Naive thymus-derived CD4-positive, alpha-beta T cell (primary cell): ENCODE measurements at regions of chr1 and their contacts with region 1.

Region 1: DNA sequence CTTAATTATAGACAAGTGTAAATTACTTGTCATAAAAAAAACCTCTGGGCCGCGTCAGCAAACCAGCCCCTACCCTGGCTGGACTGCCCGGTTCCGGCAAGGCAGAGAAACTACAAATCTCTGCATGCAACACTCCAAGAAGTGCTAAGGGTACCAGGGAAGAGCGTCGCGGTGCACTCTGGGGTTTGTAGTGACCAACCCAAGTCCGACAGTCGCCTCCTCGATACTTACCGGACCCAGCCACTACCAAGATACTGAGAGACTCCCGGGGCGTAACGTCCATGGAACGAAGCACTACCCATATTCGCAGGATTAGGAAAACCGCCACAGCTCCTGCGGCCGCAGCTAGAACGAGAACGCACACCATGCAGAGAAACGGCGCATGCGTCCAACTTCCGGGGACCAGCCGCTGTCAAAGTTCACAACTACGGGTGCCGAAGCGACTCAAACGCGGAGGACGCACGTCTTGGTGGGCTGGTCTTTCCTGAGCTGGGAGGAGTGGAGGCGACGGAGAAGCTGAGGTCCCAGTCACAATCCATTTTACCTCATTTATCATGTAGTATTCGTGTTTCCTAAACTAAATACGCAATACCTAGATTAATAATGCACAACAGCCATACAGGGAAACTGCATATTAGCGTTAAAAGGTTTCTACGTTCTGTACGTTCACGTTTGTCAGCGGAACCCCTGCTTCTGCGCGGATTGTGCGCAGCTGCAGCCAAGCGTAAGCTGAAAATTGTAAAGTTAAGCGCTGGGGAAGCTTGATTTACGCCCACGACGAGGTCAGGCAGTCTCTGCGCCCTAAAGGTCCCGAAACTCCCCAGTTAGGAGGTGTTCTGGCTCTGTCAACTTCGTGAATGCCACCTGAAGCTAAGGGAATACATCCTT is at the start of gene ALG14:
- DNase-seq: peak; percentile 81 to 96 (median 95)
- ATAC-seq: peak; percentile 96
- H3K4me3 ChIP-seq: peak within 1 kb of the TSS; percentile 96
- H3K4me3 Mint-ChIP-seq: peak within 1 kb of the TSS; percentile 88 to 100 (median 98)
- H3K27ac ChIP-seq: peak within 1 kb of the TSS; percentile 85
- H3K27ac Mint-ChIP-seq: peak within 1 kb of the TSS; percentile 95 to 100 (median 97)
- H3K4me1 ChIP-seq: peaks cover 8 to 12% of the 10 kb centered on the region in 2 donors
- H3K4me1 Mint-ChIP-seq: peaks cover 10 to 26% (median 18%) of the 10 kb centered on the region in 7 donors
- H3K27me3 ChIP-seq: no peaks in the 10 kb centered on the region
- H3K27me3 Mint-ChIP-seq: peaks cover 0 to 6% (median 0%) of the 10 kb centered on the region in 5 donors
- total RNA-seq, gene ALG14: 1.1 to 2.2 (median 1.5) TPM

Region 2: DNA sequence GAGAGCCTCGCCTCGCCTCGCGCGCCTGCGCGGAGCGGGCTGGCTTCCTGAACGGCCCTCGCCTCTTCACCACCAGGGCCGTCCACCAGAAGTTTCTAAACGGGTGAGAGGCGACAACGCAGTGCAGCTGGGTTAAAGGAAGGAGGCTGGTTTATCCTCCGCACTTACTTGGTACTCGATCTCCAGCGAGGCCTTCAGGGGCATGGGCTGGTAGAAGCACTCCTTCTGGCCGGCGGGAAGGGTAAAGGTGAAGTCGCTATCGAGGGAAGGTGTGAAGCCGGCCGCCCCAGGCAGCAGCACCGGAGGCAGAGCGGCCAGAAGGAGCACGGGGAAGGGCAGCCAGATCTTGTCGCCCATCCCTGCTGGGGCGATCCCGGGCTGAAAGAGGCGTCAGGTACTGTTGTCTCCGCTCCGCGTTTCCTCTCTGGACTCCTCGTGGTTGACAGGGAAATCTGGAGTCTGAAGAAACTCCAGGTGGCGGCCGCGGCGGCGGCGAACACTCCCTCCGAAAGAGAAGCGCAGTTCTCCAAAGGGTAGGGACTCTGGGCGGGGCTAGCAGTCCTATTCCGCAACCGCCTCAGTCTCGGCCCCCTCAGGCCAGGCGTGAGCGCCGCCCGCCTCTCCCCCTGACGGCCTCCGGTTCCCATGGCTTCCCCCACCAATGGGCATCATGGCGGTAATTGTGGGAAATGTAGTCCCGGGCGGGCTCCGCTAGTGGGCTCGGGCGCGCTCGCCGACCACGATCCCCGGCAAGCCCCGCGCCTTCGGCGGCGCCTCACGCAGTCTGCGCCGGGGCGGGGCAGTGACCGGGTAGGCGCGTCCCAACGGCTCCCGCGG is 1892.7 kb before region 1 on chr1 and contains the start of gene TMED5:
- CTCF ChIA-PET with region 1: no interaction called
- POLR2A ChIA-PET with region 1: no interaction called
- intact Hi-C with region 1: loop called in 1 of 2 experiments (anchors 1 kb)
- DNase-seq: peak; percentile 94 to 97 (median 96)
- ATAC-seq: peak; percentile 89
- H3K4me3 ChIP-seq: peak within 1 kb of the TSS; percentile 95
- H3K4me3 Mint-ChIP-seq: peak within 1 kb of the TSS; percentile 91 to 98 (median 94)
- H3K27ac ChIP-seq: peak within 1 kb of the TSS; percentile 91
- H3K27ac Mint-ChIP-seq: peak within 1 kb of the TSS; percentile 86 to 99 (median 97)
- H3K4me1 ChIP-seq: peaks cover 24 to 30% of the 10 kb centered on the region in 2 donors
- H3K4me1 Mint-ChIP-seq: peaks cover 30 to 59% (median 47%) of the 10 kb centered on the region in 7 donors
- H3K27me3 ChIP-seq: no peaks in the 10 kb centered on the region
- H3K27me3 Mint-ChIP-seq: no peaks in the 10 kb centered on the region
- total RNA-seq, gene TMED5: 37.8 to 60.0 (median 47.4) TPM

Region 3: GRCh38 chr1:93909146-93910050 is 1163.4 kb before region 1 on chr1 and contains the start of gene GCLM:
- CTCF ChIA-PET with region 1: no interaction called
- POLR2A ChIA-PET with region 1: interaction called, 3 read pairs
- intact Hi-C with region 1: loop called in 1 of 2 experiments (anchors 1 kb)
- DNase-seq: peak; percentile 81 to 97 (median 88)
- ATAC-seq: peak; percentile 98
- H3K4me3 ChIP-seq: peak within 1 kb of the TSS; percentile 61
- H3K4me3 Mint-ChIP-seq: peak within 1 kb of the TSS; percentile 86 to 99 (median 90)
- H3K27ac ChIP-seq: peak within 1 kb of the TSS; percentile 73
- H3K27ac Mint-ChIP-seq: peak within 1 kb of the TSS; percentile 60 to 94 (median 90)
- H3K4me1 ChIP-seq: peaks cover 9 to 13% of the 10 kb centered on the region in 2 donors
- H3K4me1 Mint-ChIP-seq: peaks cover 19 to 38% (median 33%) of the 10 kb centered on the region in 7 donors
- H3K27me3 ChIP-seq: no peaks in the 10 kb centered on the region
- H3K27me3 Mint-ChIP-seq: peaks cover 0 to 30% (median 0%) of the 10 kb centered on the region in 5 donors
- total RNA-seq, gene GCLM: 6.4 to 23.8 (median 11.5) TPM

Region 4: DNA sequence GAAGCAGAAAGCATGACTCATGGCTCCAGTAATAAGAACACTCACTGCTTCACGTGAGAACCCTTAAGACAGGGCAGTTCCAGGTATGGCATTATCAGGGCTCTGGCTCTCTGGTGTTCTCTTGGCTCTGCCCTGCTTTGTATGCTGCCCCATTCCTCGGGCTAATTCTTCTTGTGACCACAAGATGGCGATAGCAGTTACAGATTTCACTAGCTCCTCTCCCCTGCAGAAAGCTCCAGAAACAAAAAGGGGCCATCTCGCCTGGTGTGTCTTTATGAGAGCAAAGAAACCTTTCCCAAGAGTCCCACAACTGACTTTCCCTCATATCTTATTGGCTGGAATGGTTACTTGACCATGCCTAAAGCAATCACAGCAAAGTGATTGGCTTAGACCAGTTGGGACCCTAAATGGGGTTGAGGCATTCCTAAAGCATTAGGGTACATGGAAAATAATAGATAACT is 591.3 kb before region 1 on chr1:
- CTCF ChIA-PET with region 1: no interaction called
- POLR2A ChIA-PET with region 1: no interaction called
- intact Hi-C with region 1: no loop called
- DNase-seq: peak in 7 of 9 donors; percentile 5 to 51 (median 33)
- ATAC-seq: peak; percentile 85
- H3K4me3 ChIP-seq: no peak overlapping the region
- H3K4me3 Mint-ChIP-seq: no peak overlapping the region
- H3K27ac ChIP-seq: no peak overlapping the region
- H3K27ac Mint-ChIP-seq: peak overlapping the region in 1 of 9 donors; percentile 55
- H3K4me1 ChIP-seq: no peaks in the 10 kb centered on the region
- H3K4me1 Mint-ChIP-seq: peaks cover 0 to 2% (median 0%) of the 10 kb centered on the region in 7 donors
- H3K27me3 ChIP-seq: no peaks in the 10 kb centered on the region
- H3K27me3 Mint-ChIP-seq: no peaks in the 10 kb centered on the region

Region 5: GRCh38 chr1:94926915-94927404 is 145.8 kb before region 1 on chr1 and contains the start of gene CNN3:
- CTCF ChIA-PET with region 1: no interaction called
- POLR2A ChIA-PET with region 1: no interaction called
- intact Hi-C with region 1: loop called (anchors 1 kb)
- DNase-seq: peak; percentile 56 to 78 (median 68)
- ATAC-seq: peak; percentile 91
- H3K4me3 ChIP-seq: peak within 1 kb of the TSS; percentile 39
- H3K4me3 Mint-ChIP-seq: peak within 1 kb of the TSS; percentile 88 to 97 (median 94)
- H3K27ac ChIP-seq: peak within 1 kb of the TSS; percentile 63
- H3K27ac Mint-ChIP-seq: peak within 1 kb of the TSS; percentile 37 to 92 (median 84)
- H3K4me1 ChIP-seq: no peaks in the 10 kb centered on the region
- H3K4me1 Mint-ChIP-seq: peaks cover 12 to 38% (median 34%) of the 10 kb centered on the region in 7 donors
- H3K27me3 ChIP-seq: no peaks in the 10 kb centered on the region
- H3K27me3 Mint-ChIP-seq: peaks cover 18 to 57% (median 26%) of the 10 kb centered on the region in 5 donors
- total RNA-seq, gene CNN3: 4.4 to 14.9 (median 7.4) TPM

Region 6: DNA sequence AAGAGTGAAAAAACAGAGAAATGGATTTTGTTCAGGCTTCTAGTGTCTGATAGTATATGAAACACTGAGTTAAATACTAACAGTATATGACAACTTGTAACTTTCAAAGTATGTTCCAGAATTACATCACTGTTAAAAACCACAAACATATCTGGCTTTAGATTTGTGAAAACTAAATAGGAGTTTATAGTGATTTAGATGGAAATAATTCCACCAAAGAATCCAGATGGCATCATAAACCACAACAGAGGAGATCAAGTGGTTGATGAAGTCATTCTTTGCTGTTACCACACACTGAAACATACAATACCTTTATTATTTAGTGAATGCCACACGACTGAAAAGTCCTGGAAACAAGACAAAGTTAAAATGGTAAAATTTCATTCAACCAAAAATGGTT is 37.2 kb before region 1 on chr1:
- CTCF ChIA-PET with region 1: no interaction called
- POLR2A ChIA-PET with region 1: no interaction called
- intact Hi-C with region 1: no loop called
- DNase-seq: no peak
- ATAC-seq: no peak
- H3K4me3 ChIP-seq: no peak overlapping the region
- H3K4me3 Mint-ChIP-seq: no peak overlapping the region
- H3K27ac ChIP-seq: no peak overlapping the region
- H3K27ac Mint-ChIP-seq: no peak overlapping the region
- H3K4me1 ChIP-seq: no peaks in the 10 kb centered on the region
- H3K4me1 Mint-ChIP-seq: no peaks in the 10 kb centered on the region
- H3K27me3 ChIP-seq: no peaks in the 10 kb centered on the region
- H3K27me3 Mint-ChIP-seq: no peaks in the 10 kb centered on the region

Region 7: DNA sequence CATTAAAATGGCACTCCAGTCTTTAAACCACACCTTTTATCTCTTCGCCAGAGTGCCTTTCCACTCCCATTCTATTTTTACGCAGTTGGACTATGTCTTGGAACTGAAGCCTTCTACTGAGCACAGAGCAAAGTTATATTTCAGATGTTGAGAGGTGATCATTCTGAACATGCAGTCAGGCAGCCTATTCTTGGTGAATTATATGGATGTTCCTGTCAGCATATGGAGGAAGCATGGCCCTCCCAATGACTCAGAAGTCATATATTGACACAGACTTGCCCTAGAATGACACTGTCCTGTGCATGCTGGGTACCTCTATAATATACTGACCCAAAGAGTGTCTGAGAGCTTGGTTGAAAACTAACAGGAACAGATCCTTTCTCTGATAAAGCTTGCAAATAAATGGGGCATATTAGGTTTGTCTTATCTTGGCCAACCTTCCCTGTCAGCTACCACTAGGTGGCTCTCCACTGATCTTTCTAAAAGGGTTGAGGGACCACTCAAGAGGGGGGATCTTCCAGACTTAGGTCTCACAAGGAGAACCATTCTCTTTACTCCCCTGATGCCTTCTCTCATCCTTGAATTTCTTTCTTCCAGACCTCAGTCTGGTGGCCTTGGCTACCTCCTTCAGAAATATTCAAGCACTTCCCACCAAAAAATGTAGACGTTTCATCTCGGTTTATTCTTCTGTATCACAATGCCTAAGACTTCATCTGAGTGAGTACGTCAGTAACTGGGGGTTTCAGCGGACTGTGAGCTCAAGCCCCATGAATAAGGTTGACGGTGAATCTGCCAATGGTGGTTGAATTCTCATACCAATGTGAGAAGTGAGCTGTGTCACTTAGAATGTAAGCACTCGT is 11.8 kb after region 1 on chr1:
- CTCF ChIA-PET with region 1: interaction called, 5 read pairs
- POLR2A ChIA-PET with region 1: interaction called, 5 read pairs
- intact Hi-C with region 1: loop called in 1 of 2 experiments (anchors 1 kb)
- DNase-seq: peak in 7 of 9 donors; percentile 7 to 26 (median 20)
- ATAC-seq: peak; percentile 72
- H3K4me3 ChIP-seq: no peak overlapping the region
- H3K4me3 Mint-ChIP-seq: no peak overlapping the region
- H3K27ac ChIP-seq: no peak overlapping the region
- H3K27ac Mint-ChIP-seq: no peak overlapping the region
- H3K4me1 ChIP-seq: no peaks in the 10 kb centered on the region
- H3K4me1 Mint-ChIP-seq: peaks cover 0 to 4% (median 0%) of the 10 kb centered on the region in 7 donors
- H3K27me3 ChIP-seq: no peaks in the 10 kb centered on the region
- H3K27me3 Mint-ChIP-seq: peaks cover 0 to 29% (median 18%) of the 10 kb centered on the region in 5 donors

Region 8: GRCh38 chr1:96721416-96722160 is 1648.8 kb after region 1 on chr1 and contains the start of gene PTBP2:
- CTCF ChIA-PET with region 1: no interaction called
- POLR2A ChIA-PET with region 1: no interaction called
- intact Hi-C with region 1: loop called (anchors 2 to 5 kb)
- DNase-seq: peak; percentile 75 to 90 (median 86)
- ATAC-seq: peak; percentile 93
- H3K4me3 ChIP-seq: peak within 1 kb of the TSS; percentile 89
- H3K4me3 Mint-ChIP-seq: peak within 1 kb of the TSS; percentile 88 to 99 (median 97)
- H3K27ac ChIP-seq: peak within 1 kb of the TSS; percentile 84
- H3K27ac Mint-ChIP-seq: peak within 1 kb of the TSS; percentile 83 to 97 (median 95)
- H3K4me1 ChIP-seq: peaks cover 10 to 11% of the 10 kb centered on the region in 2 donors
- H3K4me1 Mint-ChIP-seq: peaks cover 17 to 35% (median 29%) of the 10 kb centered on the region in 7 donors
- H3K27me3 ChIP-seq: no peaks in the 10 kb centered on the region
- H3K27me3 Mint-ChIP-seq: peaks cover 0 to 16% (median 0%) of the 10 kb centered on the region in 5 donors
- total RNA-seq, gene PTBP2: 14.9 to 32.6 (median 25.6) TPM